HEK293 (cell line): ENCODE measurements at regions of chr6 and their contacts with region 1.

Region 1: DNA sequence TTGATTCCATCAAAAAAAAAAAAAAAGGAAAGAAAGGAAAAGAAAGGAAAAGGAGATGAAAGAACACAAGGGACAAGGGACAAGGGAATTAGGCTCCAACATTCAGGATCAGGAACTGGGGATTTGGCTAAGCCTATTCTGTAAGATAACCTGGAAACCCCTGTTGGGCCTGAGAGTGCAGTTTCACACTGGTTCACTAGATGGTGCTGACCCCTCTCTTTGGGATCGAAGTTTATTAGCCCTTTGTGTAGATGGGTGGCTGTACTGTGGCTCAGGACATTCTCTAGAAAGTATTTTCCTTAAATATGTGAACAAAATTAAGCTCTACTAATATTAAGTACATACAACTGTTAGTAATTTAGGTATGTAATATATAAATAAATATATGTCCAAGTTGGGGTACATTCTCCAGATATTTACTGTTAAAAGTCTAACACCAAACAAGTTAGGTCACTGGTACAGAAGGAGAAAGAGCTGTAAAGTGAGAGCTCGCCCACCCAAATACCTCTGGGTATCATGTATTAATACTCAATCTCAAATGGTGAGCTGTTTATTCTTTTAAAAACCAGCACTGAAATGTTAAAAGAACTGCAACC is 6.3 kb downstream of the OR2A4 start:
- H3K4me3 ChIP-seq: no peak overlapping the region
- H3K27ac ChIP-seq: no peak overlapping the region
- H3K4me1 ChIP-seq: no peaks in the 10 kb centered on the region
- CTCF ChIP-seq: peak; percentile 57

Region 2: DNA sequence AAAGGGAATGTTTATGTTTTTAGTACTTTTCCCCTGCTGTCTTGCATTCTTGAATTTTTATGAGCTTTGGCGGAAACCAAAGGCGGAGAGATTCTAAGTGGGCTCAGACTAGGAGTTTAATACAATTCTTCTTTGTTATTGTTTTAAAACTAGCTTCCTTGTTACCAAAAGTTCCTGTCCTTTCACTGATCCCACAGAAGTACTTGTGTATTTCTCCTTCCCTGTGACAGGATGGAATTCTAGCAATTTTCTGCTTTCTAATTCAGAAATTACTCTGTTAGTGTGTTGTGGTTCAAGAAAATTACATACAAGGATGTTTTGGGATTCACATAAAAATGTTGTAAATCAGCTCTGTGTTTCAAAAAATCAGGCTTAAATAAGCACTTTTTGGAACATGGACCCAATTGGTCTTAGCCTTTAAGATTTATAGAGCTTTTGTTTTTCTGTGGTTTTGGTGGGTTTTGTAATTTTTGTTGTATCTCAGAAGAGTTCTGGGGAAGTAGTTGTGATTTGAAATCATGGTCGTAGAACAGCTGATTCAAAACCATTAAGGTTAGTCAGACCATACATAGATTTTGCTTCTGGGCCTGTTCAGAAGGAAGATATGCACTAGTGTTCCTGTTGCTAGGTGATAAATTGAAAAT is 33.5 kb after region 1 on chr6:
- CTCF ChIA-PET with region 1: interaction called, 18 read pairs
- POLR2A ChIA-PET with region 1: no interaction called
- H3K4me3 ChIP-seq: no peak overlapping the region
- H3K27ac ChIP-seq: no peak overlapping the region
- H3K4me1 ChIP-seq: no peaks in the 10 kb centered on the region
- CTCF ChIP-seq: no peak

Region 3: GRCh38 chr6:131733376-131734016 is 38.6 kb after region 1 on chr6:
- CTCF ChIA-PET with region 1: interaction called, 18 read pairs
- POLR2A ChIA-PET with region 1: no interaction called
- H3K4me3 ChIP-seq: no peak overlapping the region
- H3K27ac ChIP-seq: no peak overlapping the region
- H3K4me1 ChIP-seq: no peaks in the 10 kb centered on the region
- CTCF ChIP-seq: no peak

Region 4: GRCh38 chr6:131883016-131883415 is 188.1 kb after region 1 on chr6:
- CTCF ChIA-PET with region 1: interaction called, 10 read pairs
- POLR2A ChIA-PET with region 1: no interaction called
- H3K4me3 ChIP-seq: no peak overlapping the region
- H3K27ac ChIP-seq: no peak overlapping the region
- H3K4me1 ChIP-seq: no peaks in the 10 kb centered on the region
- CTCF ChIP-seq: no peak

Region 5: DNA sequence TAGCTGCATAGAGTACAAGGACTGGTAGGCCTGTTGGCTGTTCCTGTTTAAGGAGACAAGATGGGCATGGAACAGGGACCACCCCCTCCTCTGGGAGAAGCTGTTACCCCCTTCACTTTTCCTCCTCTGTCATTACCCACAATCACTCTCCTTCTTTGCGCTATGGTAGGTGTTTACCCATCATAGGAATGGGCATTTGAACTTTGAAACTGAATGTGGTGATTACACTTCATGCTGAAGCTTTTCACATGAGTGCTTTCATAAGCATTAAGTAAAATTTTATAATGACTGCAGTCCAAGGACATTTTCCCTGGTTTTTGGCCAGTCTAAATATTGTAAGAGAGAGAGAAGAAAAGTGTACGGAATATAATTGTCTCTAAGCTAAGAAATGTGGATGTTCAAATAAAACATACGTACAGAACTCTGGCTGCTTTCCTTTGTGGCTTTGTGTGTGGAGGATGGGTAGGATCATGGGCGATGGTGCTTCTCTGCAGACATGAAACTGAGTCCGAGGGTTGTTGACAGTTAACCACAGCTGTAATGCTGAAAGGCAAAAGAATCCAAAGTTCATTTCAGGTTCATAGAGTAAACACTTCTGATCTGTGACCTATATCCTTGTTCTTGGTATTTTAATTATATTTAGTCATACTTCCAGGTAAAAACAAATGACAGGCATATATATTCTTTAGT is 200.0 kb after region 1 on chr6:
- CTCF ChIA-PET with region 1: interaction called, 14 read pairs
- POLR2A ChIA-PET with region 1: no interaction called
- H3K4me3 ChIP-seq: no peak overlapping the region
- H3K27ac ChIP-seq: no peak overlapping the region
- H3K4me1 ChIP-seq: no peaks in the 10 kb centered on the region
- CTCF ChIP-seq: no peak

Region 6: DNA sequence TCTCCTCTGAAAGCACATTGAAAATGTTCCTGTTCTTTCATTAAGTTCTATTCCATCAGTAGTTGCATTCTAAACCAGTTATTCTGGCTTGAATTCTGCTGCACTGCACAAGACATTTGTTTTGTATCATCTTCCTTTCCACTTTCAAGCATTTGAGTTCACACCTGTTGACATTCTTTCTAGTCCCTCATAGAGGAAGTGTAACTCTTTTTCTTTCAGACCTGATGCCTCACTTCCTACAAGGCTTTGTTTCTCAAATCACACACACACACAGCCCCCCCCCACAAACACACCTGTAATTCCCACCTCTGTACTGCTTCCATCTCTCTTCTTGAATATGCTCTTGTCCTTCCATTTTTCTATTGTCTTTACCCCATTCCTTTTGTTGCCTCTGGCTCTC is 205.3 kb after region 1 on chr6:
- CTCF ChIA-PET with region 1: interaction called, 14 read pairs
- POLR2A ChIA-PET with region 1: no interaction called
- H3K4me3 ChIP-seq: no peak overlapping the region
- H3K27ac ChIP-seq: no peak overlapping the region
- H3K4me1 ChIP-seq: no peaks in the 10 kb centered on the region
- CTCF ChIP-seq: no peak

Region 7: GRCh38 chr6:131909408-131910218 is 214.7 kb after region 1 on chr6:
- CTCF ChIA-PET with region 1: interaction called, 188 read pairs
- POLR2A ChIA-PET with region 1: no interaction called
- H3K4me3 ChIP-seq: no peak overlapping the region
- H3K27ac ChIP-seq: no peak overlapping the region
- H3K4me1 ChIP-seq: no peaks in the 10 kb centered on the region
- CTCF ChIP-seq: peak; percentile 26; the same call in 1 of the 2 replicates